CD14-positive monocyte (primary cell): ENCODE measurements at regions of chr12 and their contacts with region 1.

Region 1: DNA sequence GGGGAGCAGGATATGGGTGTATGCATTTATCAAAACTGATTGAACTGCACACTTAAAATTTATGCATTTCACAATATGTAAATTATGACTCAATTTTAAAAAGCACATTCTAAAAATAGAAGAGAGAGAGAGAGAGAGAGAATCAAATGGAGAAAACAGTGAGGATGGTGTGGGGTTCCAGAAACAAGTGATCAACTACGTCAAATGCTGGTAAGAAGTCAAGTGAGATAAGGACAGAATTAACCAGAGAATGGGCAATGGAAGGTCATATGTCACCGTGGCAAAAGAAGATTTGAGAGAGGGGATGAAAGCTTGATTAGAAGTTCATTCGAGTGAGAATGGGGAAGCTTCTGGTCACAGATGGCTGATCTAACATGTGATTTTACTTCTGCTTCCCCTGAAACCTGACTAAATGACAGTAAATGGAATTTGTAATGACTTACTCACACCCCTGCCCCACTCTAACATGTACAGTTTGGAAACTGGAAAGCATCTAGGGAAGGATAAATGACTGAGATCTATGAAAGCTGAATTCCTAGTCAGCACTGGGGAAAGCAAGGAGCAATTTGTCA is 276.5 kb upstream of the AMIGO2 start:
- DNase-seq: peak; percentile 88 to 93 (median 90)
- H3K4me3 ChIP-seq: peak overlapping the region in 2 of 3 experiments; percentile 23 to 29
- H3K4me3 Mint-ChIP-seq: peak overlapping the region; percentile 40 to 91
- H3K27ac ChIP-seq: peak overlapping the region; percentile 44 to 96
- H3K27ac Mint-ChIP-seq: peak overlapping the region; percentile 98 to 100 (median 100)
- H3K4me1 ChIP-seq: peaks cover 37 to 57% of the 10 kb centered on the region in 2 donors
- H3K4me1 Mint-ChIP-seq: peaks cover 56% of the 10 kb centered on the region
- H3K27me3 ChIP-seq: no peaks in the 10 kb centered on the region
- H3K27me3 Mint-ChIP-seq: peaks cover 0 to 3% (median 0%) of the 10 kb centered on the region in 3 donors
- CTCF ChIP-seq: no peak

Region 2: DNA sequence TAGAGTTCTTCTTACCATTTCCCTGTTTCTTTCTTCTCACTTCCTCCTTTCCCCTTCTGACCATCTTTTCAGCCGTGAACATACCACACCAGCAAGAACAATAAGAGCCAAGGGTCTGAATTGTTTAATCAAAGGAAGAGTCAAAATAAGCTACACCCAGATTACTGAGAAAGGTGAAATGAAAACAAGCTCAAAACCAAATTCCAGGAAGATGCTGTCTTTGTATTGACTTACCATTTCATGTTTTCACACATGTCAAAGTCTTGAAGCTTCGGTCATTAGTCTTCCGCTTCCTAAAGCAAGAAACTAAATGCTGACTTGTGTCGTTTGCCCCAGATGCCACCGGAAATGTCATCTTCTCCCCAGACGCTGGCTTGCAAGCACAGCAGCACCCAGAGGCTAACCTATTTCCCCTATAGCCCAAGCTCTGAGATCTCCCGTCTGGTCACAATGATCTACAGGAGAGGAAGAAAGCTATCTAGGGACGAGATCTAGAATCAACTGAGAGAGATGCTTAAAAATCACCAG is 140.0 kb before region 1 on chr12:
- intact Hi-C with region 1: loop called in 1 of 2 experiments (anchors 10 kb)
- DNase-seq: peak; percentile 79 to 87 (median 81)
- H3K4me3 ChIP-seq: peak overlapping the region; percentile 25 to 55 (median 50)
- H3K4me3 Mint-ChIP-seq: peak overlapping the region; percentile 66 to 73
- H3K27ac ChIP-seq: peak overlapping the region; percentile 70 to 72
- H3K27ac Mint-ChIP-seq: peak overlapping the region; percentile 82 to 95 (median 88)
- H3K4me1 ChIP-seq: peaks cover 48 to 49% of the 10 kb centered on the region in 2 donors
- H3K4me1 Mint-ChIP-seq: peaks cover 53% of the 10 kb centered on the region
- H3K27me3 ChIP-seq: no peaks in the 10 kb centered on the region
- H3K27me3 Mint-ChIP-seq: peaks cover 0 to 1% (median 0%) of the 10 kb centered on the region in 3 donors
- CTCF ChIP-seq: no peak

Region 3: DNA sequence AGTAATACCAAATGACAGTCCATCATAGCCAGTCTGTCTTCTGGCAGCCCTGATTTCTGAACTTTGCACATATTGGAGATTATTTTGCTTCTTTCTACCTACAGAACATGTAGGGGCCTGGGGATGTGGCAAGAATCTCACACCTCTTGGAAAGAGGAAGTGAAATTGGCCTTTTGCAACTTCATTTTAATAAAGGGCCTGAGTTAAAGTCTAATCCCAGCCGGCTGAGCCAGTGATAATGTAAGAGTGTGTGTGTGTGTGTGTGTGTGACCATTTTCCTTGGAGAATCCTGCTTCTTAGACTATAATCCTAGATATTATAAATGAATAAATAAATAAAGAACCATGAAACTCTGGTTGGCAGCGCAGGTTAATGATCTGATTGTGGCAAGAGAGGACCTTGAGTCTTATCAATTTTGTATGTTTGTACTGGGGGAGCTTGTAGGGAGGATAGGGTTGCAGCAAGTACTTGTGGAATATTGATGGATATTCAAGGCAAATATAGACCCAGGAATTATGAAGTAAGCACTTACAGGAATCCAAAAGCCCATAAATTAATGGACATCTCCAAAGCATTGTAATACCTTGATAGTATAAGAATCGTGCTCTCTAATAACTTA is 43.3 kb before region 1 on chr12:
- intact Hi-C with region 1: loop called in 1 of 2 experiments (anchors 5 kb)
- DNase-seq: peak; percentile 45 to 84 (median 62)
- H3K4me3 ChIP-seq: no peak overlapping the region
- H3K4me3 Mint-ChIP-seq: no peak overlapping the region
- H3K27ac ChIP-seq: no peak overlapping the region
- H3K27ac Mint-ChIP-seq: peak overlapping the region in 4 of 7 donors; percentile 49 to 83 (median 78)
- H3K4me1 ChIP-seq: peaks cover 11 to 27% of the 10 kb centered on the region in 2 donors
- H3K4me1 Mint-ChIP-seq: peaks cover 35% of the 10 kb centered on the region
- H3K27me3 ChIP-seq: no peaks in the 10 kb centered on the region
- H3K27me3 Mint-ChIP-seq: peaks cover 0 to 2% (median 0%) of the 10 kb centered on the region in 3 donors
- CTCF ChIP-seq: no peak

Region 4: GRCh38 chr12:47328831-47329545 is 27.2 kb before region 1 on chr12:
- intact Hi-C with region 1: no loop called
- DNase-seq: no peak
- H3K4me3 ChIP-seq: no peak overlapping the region
- H3K4me3 Mint-ChIP-seq: no peak overlapping the region
- H3K27ac ChIP-seq: no peak overlapping the region
- H3K27ac Mint-ChIP-seq: no peak overlapping the region
- H3K4me1 ChIP-seq: no peaks in the 10 kb centered on the region
- H3K4me1 Mint-ChIP-seq: peaks cover 1% of the 10 kb centered on the region
- H3K27me3 ChIP-seq: no peaks in the 10 kb centered on the region
- H3K27me3 Mint-ChIP-seq: peaks cover 2 to 5% (median 4%) of the 10 kb centered on the region in 3 donors
- CTCF ChIP-seq: no peak

Region 5: DNA sequence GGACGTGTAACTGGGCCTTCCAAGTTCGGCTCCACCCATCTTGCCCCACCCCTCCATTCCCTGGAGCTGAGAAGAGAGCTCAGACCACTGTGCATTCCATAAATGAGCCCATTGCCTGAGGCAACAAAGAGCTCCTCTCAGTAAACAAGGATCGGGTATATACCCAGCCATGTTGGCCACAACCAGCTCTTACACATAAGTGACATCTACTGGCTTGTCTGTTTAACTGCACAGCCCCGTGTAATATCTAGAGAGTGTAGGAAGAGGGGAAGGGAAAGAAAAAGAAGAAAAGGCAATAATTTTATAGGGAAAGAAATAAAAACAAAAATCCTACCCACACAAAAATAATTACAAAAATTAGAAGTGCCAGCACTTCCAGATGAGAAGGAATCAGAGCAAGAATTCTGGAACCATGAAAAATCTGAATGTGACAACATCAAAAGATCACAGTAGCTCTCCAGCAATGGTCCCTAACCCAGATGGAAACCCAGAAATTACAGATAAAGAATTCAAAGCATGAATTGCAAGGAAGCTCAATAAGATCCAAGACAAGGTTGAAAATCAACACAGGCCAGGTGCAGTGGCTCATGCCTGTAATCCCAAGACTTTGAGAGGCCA is 41.6 kb after region 1 on chr12:
- intact Hi-C with region 1: loop called (anchors 2 to 10 kb)
- DNase-seq: peak; percentile 34 to 57 (median 53)
- H3K4me3 ChIP-seq: no peak overlapping the region
- H3K4me3 Mint-ChIP-seq: no peak overlapping the region
- H3K27ac ChIP-seq: no peak overlapping the region
- H3K27ac Mint-ChIP-seq: peak overlapping the region in 3 of 7 donors; percentile 27 to 63 (median 46)
- H3K4me1 ChIP-seq: peaks cover 9 to 17% of the 10 kb centered on the region in 2 donors
- H3K4me1 Mint-ChIP-seq: peaks cover 37% of the 10 kb centered on the region
- H3K27me3 ChIP-seq: no peaks in the 10 kb centered on the region
- H3K27me3 Mint-ChIP-seq: peaks cover 0 to 2% (median 0%) of the 10 kb centered on the region in 3 donors
- CTCF ChIP-seq: peak; percentile 70

Region 6: DNA sequence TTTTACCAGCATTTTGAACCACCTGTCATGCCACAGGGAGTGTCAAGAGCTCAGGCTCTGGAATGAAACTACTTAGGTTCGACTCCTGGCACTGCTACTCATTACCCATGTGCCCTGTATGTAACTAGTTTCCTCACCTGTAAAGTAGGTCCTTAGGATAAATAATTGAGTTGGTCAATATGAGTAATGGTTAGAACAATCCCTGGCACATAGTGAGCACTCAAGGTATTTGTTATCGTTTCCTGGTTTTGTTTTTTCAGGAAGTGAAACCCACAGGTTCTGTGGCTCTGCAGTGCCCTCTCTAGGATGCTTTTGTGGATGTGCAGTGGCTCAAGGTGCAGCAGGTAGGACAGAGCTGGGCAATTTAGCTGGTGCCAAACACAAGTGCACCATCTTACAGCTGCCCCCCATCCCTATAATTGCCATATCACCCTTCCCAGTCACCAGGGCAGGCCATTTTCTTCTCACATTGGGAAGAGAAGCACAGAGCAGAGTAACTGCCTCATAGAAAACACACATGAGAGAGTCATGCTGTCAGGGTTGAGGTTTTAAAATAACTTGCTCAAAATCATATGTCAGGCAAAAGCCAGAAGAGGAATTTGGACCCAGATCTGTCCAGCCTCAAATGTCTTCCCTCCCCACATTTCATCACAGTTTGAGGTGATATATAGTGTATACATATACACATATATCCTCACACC is 52.1 kb after region 1 on chr12:
- intact Hi-C with region 1: loop called in 1 of 2 experiments (anchors 10 kb)
- DNase-seq: peak; percentile 42 to 70 (median 61)
- H3K4me3 ChIP-seq: no peak overlapping the region
- H3K4me3 Mint-ChIP-seq: no peak overlapping the region
- H3K27ac ChIP-seq: no peak overlapping the region
- H3K27ac Mint-ChIP-seq: no peak overlapping the region
- H3K4me1 ChIP-seq: no peaks in the 10 kb centered on the region
- H3K4me1 Mint-ChIP-seq: peaks cover 3% of the 10 kb centered on the region
- H3K27me3 ChIP-seq: no peaks in the 10 kb centered on the region
- H3K27me3 Mint-ChIP-seq: peaks cover 1 to 6% (median 5%) of the 10 kb centered on the region in 3 donors
- CTCF ChIP-seq: peak; percentile 61

Region 7: DNA sequence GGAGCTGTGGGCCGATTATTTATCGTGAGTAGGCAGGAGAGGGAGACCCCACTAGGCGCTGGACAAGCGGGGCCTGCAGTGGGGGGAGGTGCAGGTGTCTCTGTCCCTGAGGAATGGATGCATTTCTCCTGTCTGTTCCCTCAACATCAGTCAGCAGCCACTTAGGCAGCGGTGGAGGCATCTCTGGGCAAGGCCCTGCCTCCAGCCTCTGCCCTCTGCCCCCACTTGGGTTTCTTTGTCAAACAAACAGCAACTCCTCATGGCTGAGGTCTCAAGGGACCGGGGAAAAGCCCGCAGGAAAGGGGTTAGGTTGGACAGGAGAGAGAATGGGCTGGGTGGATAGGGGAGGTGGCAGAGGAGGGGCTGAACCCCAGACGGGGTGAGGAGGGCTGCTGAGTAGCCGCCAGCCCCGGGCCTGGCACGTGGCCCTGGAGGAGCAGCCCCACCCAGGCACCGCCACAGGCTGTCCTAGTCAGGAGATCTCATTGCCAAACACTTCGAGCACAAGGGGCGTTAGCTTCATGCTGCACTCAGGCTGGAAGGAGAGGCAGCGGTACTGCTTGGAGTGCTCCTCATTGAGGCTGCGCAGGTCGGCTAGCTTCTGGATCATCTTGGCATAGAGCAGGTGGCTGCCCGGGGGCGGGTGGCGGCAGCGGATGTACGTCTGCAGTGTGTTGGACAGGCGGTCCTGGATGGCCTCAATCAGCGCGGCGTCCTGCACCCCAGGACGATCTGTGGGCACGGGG is 488.2 kb after region 1 on chr12:
- intact Hi-C with region 1: no loop called
- DNase-seq: no peak
- H3K4me3 ChIP-seq: no peak overlapping the region
- H3K4me3 Mint-ChIP-seq: no peak overlapping the region
- H3K27ac ChIP-seq: no peak overlapping the region
- H3K27ac Mint-ChIP-seq: no peak overlapping the region
- H3K4me1 ChIP-seq: no peaks in the 10 kb centered on the region
- H3K4me1 Mint-ChIP-seq: no peaks in the 10 kb centered on the region
- H3K27me3 ChIP-seq: no peaks in the 10 kb centered on the region
- H3K27me3 Mint-ChIP-seq: peaks cover 2 to 6% (median 3%) of the 10 kb centered on the region in 3 donors
- CTCF ChIP-seq: no peak